ENCODE measurements at regions of chr5 and their contacts with region 1.

Region 1: GRCh38 chr5:159427180-159428012 is 97.1 kb upstream of the IL12B start:
- DNase-seq: peak; percentile 56
- CTCF ChIP-seq: no peak

Region 2: GRCh38 chr5:159409801-159410200 is 17.6 kb before region 1 on chr5:
- CTCF ChIA-PET with region 1: interaction called, 10 read pairs
- POLR2A ChIA-PET with region 1: interaction called, 3 read pairs
- DNase-seq: no peak
- CTCF ChIP-seq: no peak

Region 3: GRCh38 chr5:159928122-159928909 is 500.9 kb after region 1 on chr5:
- CTCF ChIA-PET with region 1: no interaction called
- POLR2A ChIA-PET with region 1: no interaction called
- DNase-seq: no peak
- CTCF ChIP-seq: no peak

Measured in GM10248 (cell line).